Activated T-helper 1 cell treated with anti-CD3 and anti-CD28 coated beads, Interleukin-12 subunit alpha, Interleukin-12 subunit beta, Interleukin-2, Interleukin-4 antibody, amounts not matched to agents 30 ng/mL and 10 ng/mL and 1 ng/mL, durations not matched to agents 14 hours and 24 hours and 36 hours (primary cell): ENCODE measurements at regions of chr18 and their contacts with region 1.

Region 1: DNA sequence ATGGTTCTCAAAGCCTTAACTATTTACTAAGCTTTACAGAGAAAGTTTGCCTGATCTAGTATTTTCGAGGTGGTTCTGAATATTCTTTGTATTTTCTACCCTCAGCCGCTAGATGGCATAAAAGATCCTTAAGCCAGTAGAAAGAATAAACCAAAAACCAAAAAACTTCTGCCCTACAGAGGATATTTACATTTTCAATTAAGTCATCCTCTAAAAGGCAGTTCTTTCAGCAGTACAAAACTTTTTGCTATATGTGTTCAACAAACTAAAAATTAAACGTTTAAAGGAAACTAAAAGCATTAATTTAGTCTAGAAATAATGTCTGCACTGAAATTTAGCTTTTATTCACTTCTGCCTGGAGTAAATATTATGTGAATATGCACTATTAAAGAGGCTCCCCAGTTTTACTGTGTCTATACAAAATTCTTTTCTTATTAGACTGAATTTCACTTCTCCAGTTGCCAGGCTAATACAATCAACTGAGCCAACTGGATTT is 297.5 kb downstream of the PIEZO2 start:
- DNase-seq: no peak
- H3K4me3 Mint-ChIP-seq: no peak overlapping the region
- H3K27ac Mint-ChIP-seq: no peak overlapping the region
- H3K4me1 Mint-ChIP-seq: no peaks in the 10 kb centered on the region
- H3K27me3 Mint-ChIP-seq: peaks cover 4% of the 10 kb centered on the region

Region 2: GRCh38 chr18:10979411-10979810 is 127.5 kb after region 1 on chr18:
- intact Hi-C with region 1: no loop called
- DNase-seq: no peak
- H3K4me3 Mint-ChIP-seq: no peak overlapping the region
- H3K27ac Mint-ChIP-seq: no peak overlapping the region
- H3K4me1 Mint-ChIP-seq: no peaks in the 10 kb centered on the region
- H3K27me3 Mint-ChIP-seq: no peaks in the 10 kb centered on the region

Region 3: GRCh38 chr18:11040823-11041656 is 189.2 kb after region 1 on chr18:
- intact Hi-C with region 1: loop called (anchors 1 kb)
- DNase-seq: peak; percentile 3
- H3K4me3 Mint-ChIP-seq: no peak overlapping the region
- H3K27ac Mint-ChIP-seq: no peak overlapping the region
- H3K4me1 Mint-ChIP-seq: no peaks in the 10 kb centered on the region
- H3K27me3 Mint-ChIP-seq: peaks cover 13% of the 10 kb centered on the region

Region 4: GRCh38 chr18:11149441-11150270 is 297.8 kb after region 1 on chr18 and contains the start of gene PIEZO2:
- intact Hi-C with region 1: loop called (anchors 5 kb)
- DNase-seq: no peak
- H3K4me3 Mint-ChIP-seq: no peak within 1 kb of the TSS
- H3K27ac Mint-ChIP-seq: no peak within 1 kb of the TSS
- H3K4me1 Mint-ChIP-seq: no peaks in the 10 kb centered on the region
- H3K27me3 Mint-ChIP-seq: peaks cover 31% of the 10 kb centered on the region
- total RNA-seq, gene PIEZO2: not detected in 2 replicates

Region 5: GRCh38 chr18:11518788-11519685 is 667.2 kb after region 1 on chr18:
- intact Hi-C with region 1: loop called (anchors 5 kb)
- DNase-seq: peak; percentile 6
- H3K4me3 Mint-ChIP-seq: no peak overlapping the region
- H3K27ac Mint-ChIP-seq: no peak overlapping the region
- H3K4me1 Mint-ChIP-seq: no peaks in the 10 kb centered on the region
- H3K27me3 Mint-ChIP-seq: peaks cover 6% of the 10 kb centered on the region

Region 6: DNA sequence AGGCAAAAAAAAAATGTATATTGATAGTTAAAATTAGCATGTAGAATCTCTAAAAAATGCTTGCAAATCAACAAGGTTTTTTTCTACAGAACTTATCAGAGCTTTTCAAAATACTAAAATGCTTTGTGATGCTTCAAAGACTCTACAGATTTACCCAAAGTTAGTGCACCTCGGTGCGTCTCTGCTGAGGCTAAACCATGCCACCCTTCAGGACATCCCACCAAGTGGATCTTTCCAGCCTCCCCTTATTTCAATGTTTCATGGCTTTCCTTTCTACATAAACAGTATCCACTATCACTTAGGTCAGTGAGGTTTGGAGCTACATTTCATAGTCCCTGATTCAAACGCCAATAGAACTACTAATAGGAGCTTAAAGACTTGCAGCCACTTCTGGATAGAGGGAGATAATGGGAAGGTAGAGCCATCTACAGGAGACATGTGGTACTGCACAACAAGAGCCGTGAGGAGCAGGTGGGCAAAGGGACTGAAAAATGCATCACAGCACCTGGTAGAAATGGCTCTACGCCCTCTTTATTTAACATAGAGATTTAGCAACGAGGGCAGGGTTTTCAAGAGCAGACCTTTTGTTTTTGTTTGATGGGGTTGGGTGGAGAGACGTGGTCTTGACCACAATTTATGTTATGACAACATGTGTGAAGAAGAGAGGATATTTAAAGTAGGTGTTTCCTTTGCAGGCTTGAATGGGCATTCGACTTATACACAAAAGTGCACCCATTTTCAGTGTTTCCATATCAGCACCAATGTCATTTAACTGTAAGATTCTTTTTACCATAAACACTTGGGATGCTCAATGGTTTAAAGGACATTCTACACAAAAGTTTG is 701.4 kb after region 1 on chr18:
- intact Hi-C with region 1: loop called (anchors 5 kb)
- DNase-seq: peak; percentile 6
- H3K4me3 Mint-ChIP-seq: no peak overlapping the region
- H3K27ac Mint-ChIP-seq: no peak overlapping the region
- H3K4me1 Mint-ChIP-seq: no peaks in the 10 kb centered on the region
- H3K27me3 Mint-ChIP-seq: peaks cover 9% of the 10 kb centered on the region

Region 7: GRCh38 chr18:12038639-12039417 is 1187.0 kb after region 1 on chr18:
- intact Hi-C with region 1: loop called (anchors 5 kb)
- DNase-seq: peak; percentile 69
- H3K4me3 Mint-ChIP-seq: peak overlapping the region; percentile 69
- H3K27ac Mint-ChIP-seq: no peak overlapping the region
- H3K4me1 Mint-ChIP-seq: peaks cover 19% of the 10 kb centered on the region
- H3K27me3 Mint-ChIP-seq: peaks cover 5% of the 10 kb centered on the region